ENCODE measurements at regions of chr6 and their contacts with region 1.

Region 1: GRCh38 chr6:44074439-44075136 is 52.7 kb downstream of the MRPL14 start:
- DNase-seq: no peak
- H3K4me3 ChIP-seq: no peak overlapping the region
- H3K27me3 ChIP-seq: no peaks in the 10 kb centered on the region
- CTCF ChIP-seq: peak; percentile 93

Region 2: GRCh38 chr6:43667245-43668150 is 407.1 kb before region 1 on chr6:
- CTCF ChIA-PET with region 1: interaction called, 120 read pairs
- POLR2A ChIA-PET with region 1: no interaction called
- DNase-seq: no peak
- H3K4me3 ChIP-seq: no peak overlapping the region
- H3K27me3 ChIP-seq: no peaks in the 10 kb centered on the region
- CTCF ChIP-seq: peak; percentile 98

Region 3: GRCh38 chr6:43769526-43770416 is 304.8 kb before region 1 on chr6 and contains the start of gene VEGFA:
- CTCF ChIA-PET with region 1: interaction called, 338 read pairs
- POLR2A ChIA-PET with region 1: interaction called, 9 read pairs
- DNase-seq: no peak
- H3K4me3 ChIP-seq: peak within 1 kb of the TSS; percentile 94
- H3K27me3 ChIP-seq: peaks cover 3% of the 10 kb centered on the region; the same call in 1 of the 2 replicates
- CTCF ChIP-seq: peak; percentile 100
- polyA plus RNA-seq, gene VEGFA: 197 and 357 TPM in 2 replicates

Region 4: GRCh38 chr6:43951063-43951755 is 123.4 kb before region 1 on chr6:
- CTCF ChIA-PET with region 1: interaction called, 33 read pairs
- POLR2A ChIA-PET with region 1: no interaction called
- DNase-seq: no peak
- H3K4me3 ChIP-seq: no peak overlapping the region
- H3K27me3 ChIP-seq: no peaks in the 10 kb centered on the region; the same call in 1 of the 2 replicates
- CTCF ChIP-seq: peak; percentile 64

Region 5: DNA sequence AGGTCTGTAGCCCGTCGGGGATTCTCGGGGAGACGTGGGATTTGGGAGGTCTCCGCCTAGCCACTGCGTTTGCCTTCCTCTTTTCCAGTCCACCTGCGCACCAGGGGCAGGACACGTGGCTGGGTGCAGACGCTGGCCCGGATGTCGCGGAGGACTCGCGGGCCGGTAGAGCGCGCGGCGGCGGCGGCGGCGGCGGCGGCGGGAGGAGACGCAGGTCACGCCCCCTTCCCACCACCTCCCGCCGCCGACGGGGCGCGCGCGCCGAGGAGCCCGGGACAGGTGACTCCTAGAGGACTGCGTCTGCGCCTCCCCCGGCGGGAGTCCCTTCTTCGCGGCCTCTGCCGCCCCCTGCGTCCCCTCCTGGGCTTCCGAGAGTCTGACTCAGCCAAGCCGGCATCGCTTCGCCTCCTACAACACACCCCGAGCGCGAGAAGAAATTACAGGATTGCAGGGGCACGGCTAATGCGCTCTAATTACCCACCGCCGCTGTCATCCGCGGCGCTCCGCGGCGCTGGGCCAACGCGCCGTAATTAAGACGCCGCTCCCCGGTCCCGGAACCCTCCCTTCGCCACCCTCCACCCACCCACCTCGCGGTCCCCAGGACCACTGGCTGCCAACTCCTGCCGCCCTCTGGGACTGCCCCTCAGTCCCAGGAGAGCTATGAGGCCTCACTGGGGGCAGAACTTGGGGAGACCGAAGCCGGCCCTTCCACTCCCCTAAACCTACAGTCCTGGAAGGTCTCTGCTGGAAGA is 71.8 kb before region 1 on chr6:
- CTCF ChIA-PET with region 1: interaction called, 17 read pairs
- POLR2A ChIA-PET with region 1: no interaction called
- DNase-seq: no peak
- H3K4me3 ChIP-seq: peak overlapping the region; percentile 5
- H3K27me3 ChIP-seq: no peaks in the 10 kb centered on the region
- CTCF ChIP-seq: peak; percentile 42

Region 6: DNA sequence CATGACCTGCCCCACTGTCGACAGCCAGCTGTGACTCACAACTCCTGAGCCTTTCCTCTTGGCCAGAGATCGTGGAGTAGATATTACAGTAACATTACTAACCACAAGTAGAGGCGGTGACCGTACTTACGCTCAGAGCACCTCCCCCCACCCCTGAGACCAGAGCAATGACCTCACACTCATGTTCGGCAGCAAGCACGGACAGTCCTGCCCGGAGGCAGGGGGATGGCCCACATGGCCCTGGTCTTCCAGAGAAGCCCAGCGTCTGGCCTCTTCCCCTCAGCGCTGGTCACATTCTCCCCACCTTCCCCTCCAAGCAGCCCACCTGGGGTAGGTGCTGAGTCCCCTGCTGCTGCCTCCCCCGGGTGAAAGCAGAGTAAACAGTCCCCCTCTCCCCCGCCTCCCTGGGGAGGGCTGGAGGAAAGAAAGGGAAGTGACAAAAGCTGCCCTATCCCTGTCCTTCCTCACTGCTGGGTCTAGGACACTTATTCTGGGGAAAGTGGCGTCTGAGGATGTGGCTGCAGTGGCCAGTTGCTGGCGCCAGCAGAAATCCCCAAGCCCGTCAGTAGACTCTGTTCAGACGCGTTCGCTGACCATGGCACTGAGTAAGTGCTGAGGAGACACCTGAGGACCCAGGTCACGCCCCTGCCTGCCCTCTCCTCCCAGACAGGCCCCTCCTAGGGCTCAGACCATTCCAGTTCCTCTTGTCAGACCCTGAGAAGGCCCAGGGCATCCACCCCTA is 15.8 kb before region 1 on chr6:
- CTCF ChIA-PET with region 1: interaction called, 13 read pairs
- POLR2A ChIA-PET with region 1: no interaction called
- DNase-seq: peak; percentile 99
- H3K4me3 ChIP-seq: no peak overlapping the region
- H3K27me3 ChIP-seq: no peaks in the 10 kb centered on the region
- CTCF ChIP-seq: no peak